ENCODE measurements at regions of chr1 and their contacts with region 1.

Region 1: GRCh38 chr1:214551436-214552173 is at the start of gene PTPN14:
- DNase-seq: peak; percentile 97
- H3K4me3 Mint-ChIP-seq: peak within 1 kb of the TSS; percentile 89
- H3K27ac Mint-ChIP-seq: peak within 1 kb of the TSS; percentile 90
- H3K4me1 Mint-ChIP-seq: peaks cover 39% of the 10 kb centered on the region
- H3K27me3 Mint-ChIP-seq: no peaks in the 10 kb centered on the region
- CTCF ChIP-seq: peak; percentile 77
- total RNA-seq, gene PTPN14: 240 and 243 TPM in 2 replicates

Region 2: GRCh38 chr1:214386747-214387146 is 164.9 kb before region 1 on chr1:
- CTCF ChIA-PET with region 1: interaction called, 17 read pairs
- POLR2A ChIA-PET with region 1: interaction called, 61 read pairs
- intact Hi-C with region 1: loop called (anchors 1 kb)
- DNase-seq: peak; percentile 83
- H3K4me3 Mint-ChIP-seq: no peak overlapping the region
- H3K27ac Mint-ChIP-seq: peak overlapping the region; percentile 76
- H3K4me1 Mint-ChIP-seq: peaks cover 14% of the 10 kb centered on the region
- H3K27me3 Mint-ChIP-seq: no peaks in the 10 kb centered on the region
- CTCF ChIP-seq: no peak

Region 3: GRCh38 chr1:214422137-214422671 is 129.4 kb before region 1 on chr1:
- CTCF ChIA-PET with region 1: interaction called, 7 read pairs
- POLR2A ChIA-PET with region 1: interaction called, 126 read pairs
- intact Hi-C with region 1: no loop called
- DNase-seq: peak; percentile 84
- H3K4me3 Mint-ChIP-seq: peak overlapping the region; percentile 6
- H3K27ac Mint-ChIP-seq: peak overlapping the region; percentile 80
- H3K4me1 Mint-ChIP-seq: peaks cover 77% of the 10 kb centered on the region
- H3K27me3 Mint-ChIP-seq: no peaks in the 10 kb centered on the region
- CTCF ChIP-seq: no peak

Region 4: DNA sequence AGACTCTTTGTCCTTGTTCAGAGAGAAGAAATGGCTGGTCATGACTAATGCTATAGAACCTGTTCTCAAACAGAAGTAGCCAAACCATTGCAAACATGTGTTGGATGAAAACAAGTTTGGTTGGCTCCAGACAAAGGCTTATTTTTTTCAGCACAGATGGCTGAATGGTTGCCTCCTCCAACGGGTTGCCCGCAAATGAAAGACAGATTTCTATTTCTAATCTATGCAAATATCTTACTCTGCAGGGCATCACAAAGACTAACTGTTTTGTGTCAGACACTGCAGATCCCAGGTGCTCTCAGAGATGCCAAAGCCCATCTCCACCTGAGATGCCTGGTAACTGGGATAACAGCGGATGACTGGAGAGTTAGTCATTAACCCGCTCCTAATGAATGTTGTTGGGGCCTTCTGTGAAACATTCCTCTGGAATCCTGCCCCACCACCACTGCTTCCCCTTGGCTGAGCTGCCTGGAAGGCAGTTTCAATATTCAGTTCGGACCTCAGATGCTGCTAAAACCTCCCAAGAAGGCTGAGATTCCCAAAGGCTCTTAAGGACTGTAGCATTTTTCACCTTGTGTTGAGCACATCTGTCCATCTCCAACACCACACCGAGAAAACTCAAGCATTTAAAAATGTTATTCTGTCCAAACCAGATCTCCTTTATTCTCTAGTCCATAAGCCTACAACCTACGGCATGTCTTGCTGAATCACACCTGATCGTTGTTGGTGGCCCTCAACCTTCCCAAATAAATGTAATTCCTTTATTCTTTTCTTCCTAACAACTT is 104.6 kb before region 1 on chr1:
- CTCF ChIA-PET with region 1: interaction called, 41 read pairs
- POLR2A ChIA-PET with region 1: interaction called, 881 read pairs
- intact Hi-C with region 1: loop called (anchors 2 kb)
- DNase-seq: peak; percentile 97
- H3K4me3 Mint-ChIP-seq: peak overlapping the region; percentile 26
- H3K27ac Mint-ChIP-seq: peak overlapping the region; percentile 81
- H3K4me1 Mint-ChIP-seq: peaks cover 59% of the 10 kb centered on the region
- H3K27me3 Mint-ChIP-seq: no peaks in the 10 kb centered on the region
- CTCF ChIP-seq: no peak

Region 5: DNA sequence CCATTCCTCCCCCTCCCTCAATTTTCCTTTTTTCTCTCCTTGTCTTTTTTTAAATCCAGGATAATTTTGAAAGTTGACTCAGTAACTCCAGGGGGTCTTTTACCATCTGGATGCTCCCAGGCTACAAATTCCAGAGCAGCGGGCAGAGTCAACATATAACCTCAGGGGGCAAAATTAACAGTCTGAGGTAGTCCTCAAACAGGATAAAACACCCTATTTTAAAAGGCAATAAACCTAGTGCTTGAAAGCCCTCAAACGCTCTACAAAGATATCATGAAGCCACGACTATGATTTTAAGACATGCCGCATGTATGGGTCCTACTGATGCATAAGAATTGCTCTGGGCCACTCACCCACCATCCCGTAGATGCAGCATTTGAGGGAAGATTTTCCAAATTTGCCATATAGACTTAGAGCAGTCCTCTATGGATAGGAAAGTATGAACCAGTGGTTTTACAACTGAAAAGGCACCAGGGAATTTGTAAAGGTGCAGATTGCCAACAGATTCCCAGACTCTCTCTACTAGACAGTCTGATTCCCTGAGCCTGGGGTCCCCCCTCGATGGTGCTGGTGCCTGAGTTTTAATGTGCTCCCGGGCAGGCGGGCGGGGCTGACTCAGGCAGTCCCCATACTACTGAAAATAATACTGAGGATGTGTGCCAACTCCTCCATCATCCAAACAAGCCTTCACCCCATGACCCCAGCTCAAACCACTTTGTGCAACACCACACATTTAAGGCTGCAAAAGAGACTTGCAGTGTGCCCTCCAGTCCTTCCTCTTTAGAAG is 37.4 kb before region 1 on chr1:
- CTCF ChIA-PET with region 1: interaction called, 11 read pairs
- POLR2A ChIA-PET with region 1: interaction called, 11 read pairs
- intact Hi-C with region 1: no loop called
- DNase-seq: peak; percentile 71
- H3K4me3 Mint-ChIP-seq: no peak overlapping the region
- H3K27ac Mint-ChIP-seq: peak overlapping the region; percentile 78
- H3K4me1 Mint-ChIP-seq: peaks cover 75% of the 10 kb centered on the region
- H3K27me3 Mint-ChIP-seq: no peaks in the 10 kb centered on the region
- CTCF ChIP-seq: no peak

Region 6: GRCh38 chr1:214566158-214567104 is 14.8 kb after region 1 on chr1:
- CTCF ChIA-PET with region 1: interaction called, 291 read pairs
- POLR2A ChIA-PET with region 1: interaction called, 2,189 read pairs
- intact Hi-C with region 1: no loop called
- DNase-seq: peak; percentile 85
- H3K4me3 Mint-ChIP-seq: no peak overlapping the region
- H3K27ac Mint-ChIP-seq: peak overlapping the region; percentile 36
- H3K4me1 Mint-ChIP-seq: peaks cover 51% of the 10 kb centered on the region
- H3K27me3 Mint-ChIP-seq: no peaks in the 10 kb centered on the region
- CTCF ChIP-seq: no peak

Region 7: DNA sequence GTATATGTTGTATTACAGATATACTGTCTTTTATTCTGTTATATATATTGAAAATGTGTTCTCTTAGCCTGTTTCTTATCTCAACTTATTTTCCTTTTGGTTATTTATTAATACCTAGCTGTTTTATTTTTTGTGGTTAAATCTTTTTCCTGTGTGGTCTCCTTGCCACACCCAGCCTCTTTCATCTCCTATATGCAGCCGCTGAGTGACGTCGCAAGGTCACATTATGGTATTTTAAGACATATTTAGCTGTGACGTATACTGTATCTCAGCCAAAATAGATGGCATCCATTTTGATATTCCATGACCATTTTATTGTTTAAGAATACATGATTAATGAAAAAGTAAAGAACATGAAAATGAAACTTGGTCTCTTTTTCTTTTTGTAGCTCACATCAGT is 80.5 kb after region 1 on chr1:
- CTCF ChIA-PET with region 1: interaction called, 17 read pairs
- POLR2A ChIA-PET with region 1: interaction called, 3 read pairs
- intact Hi-C with region 1: no loop called
- DNase-seq: no peak
- H3K4me3 Mint-ChIP-seq: no peak overlapping the region
- H3K27ac Mint-ChIP-seq: peak overlapping the region; percentile 66
- H3K4me1 Mint-ChIP-seq: peaks cover 4% of the 10 kb centered on the region
- H3K27me3 Mint-ChIP-seq: no peaks in the 10 kb centered on the region
- CTCF ChIP-seq: no peak

Region 8: DNA sequence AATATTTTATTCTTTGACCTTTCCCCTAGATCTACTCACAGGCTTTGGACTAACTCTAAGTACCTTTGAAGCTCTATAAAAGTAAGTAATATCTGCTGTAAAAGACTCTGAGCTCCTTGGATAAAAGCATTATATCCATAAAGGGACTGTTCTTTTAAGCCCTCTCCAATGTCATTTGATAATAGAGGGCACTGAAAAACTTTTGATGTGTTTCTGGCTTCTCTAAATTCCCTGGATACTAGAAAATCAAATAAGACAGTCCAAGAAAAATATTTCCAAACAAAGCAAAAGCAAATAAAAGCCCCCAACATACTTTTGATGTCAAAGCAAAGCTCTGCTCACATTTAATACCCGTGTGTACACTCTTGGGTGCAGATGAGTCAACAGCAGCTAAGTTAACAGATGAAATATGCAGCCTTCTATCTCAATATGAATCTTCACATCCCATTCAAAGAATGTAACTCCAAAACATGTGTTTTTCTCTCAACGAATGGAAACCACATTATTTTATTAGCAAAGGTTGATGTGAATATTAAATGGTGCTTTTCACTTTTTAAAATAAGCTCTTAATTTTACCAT is 281.7 kb after region 1 on chr1:
- CTCF ChIA-PET with region 1: no interaction called
- POLR2A ChIA-PET with region 1: no interaction called
- intact Hi-C with region 1: no loop called
- DNase-seq: peak; percentile 22
- H3K4me3 Mint-ChIP-seq: no peak overlapping the region
- H3K27ac Mint-ChIP-seq: no peak overlapping the region
- H3K4me1 Mint-ChIP-seq: peaks cover 3% of the 10 kb centered on the region
- H3K27me3 Mint-ChIP-seq: no peaks in the 10 kb centered on the region
- CTCF ChIP-seq: no peak

Measured in MCF 10A (cell line).